BJ (cell line): ENCODE measurements at regions of chr10 and their contacts with region 1.

Region 1: GRCh38 chr10:50896721-50897120 is 11.3 kb upstream of the A1CF start:
- DNase-seq: no peak
- H3K4me3 ChIP-seq: no peak overlapping the region
- H3K27me3 ChIP-seq: no peaks in the 10 kb centered on the region
- CTCF ChIP-seq: no peak

Region 2: GRCh38 chr10:50636618-50637579 is 259.8 kb before region 1 on chr10:
- CTCF ChIA-PET with region 1: no interaction called
- POLR2A ChIA-PET with region 1: no interaction called
- DNase-seq: no peak
- H3K4me3 ChIP-seq: no peak overlapping the region
- H3K27me3 ChIP-seq: no peaks in the 10 kb centered on the region
- CTCF ChIP-seq: no peak

Region 3: GRCh38 chr10:50909334-50910014 is 12.8 kb after region 1 on chr10:
- CTCF ChIA-PET with region 1: no interaction called
- POLR2A ChIA-PET with region 1: no interaction called
- DNase-seq: no peak
- H3K4me3 ChIP-seq: no peak overlapping the region
- H3K27me3 ChIP-seq: no peaks in the 10 kb centered on the region
- CTCF ChIP-seq: no peak

Region 4: GRCh38 chr10:51214207-51215196 is 317.8 kb after region 1 on chr10:
- CTCF ChIA-PET with region 1: no interaction called
- POLR2A ChIA-PET with region 1: no interaction called
- DNase-seq: no peak
- H3K4me3 ChIP-seq: no peak overlapping the region
- H3K27me3 ChIP-seq: no peaks in the 10 kb centered on the region
- CTCF ChIP-seq: no peak

Region 5: GRCh38 chr10:51743146-51743545 is 846.4 kb after region 1 on chr10:
- CTCF ChIA-PET with region 1: no interaction called
- POLR2A ChIA-PET with region 1: interaction called, 11 read pairs
- DNase-seq: no peak
- H3K4me3 ChIP-seq: no peak overlapping the region
- H3K27me3 ChIP-seq: no peaks in the 10 kb centered on the region
- CTCF ChIP-seq: no peak